CD4-positive, alpha-beta memory T cell (primary cell): ENCODE measurements at regions of chr15 and their contacts with region 1.

Region 1: DNA sequence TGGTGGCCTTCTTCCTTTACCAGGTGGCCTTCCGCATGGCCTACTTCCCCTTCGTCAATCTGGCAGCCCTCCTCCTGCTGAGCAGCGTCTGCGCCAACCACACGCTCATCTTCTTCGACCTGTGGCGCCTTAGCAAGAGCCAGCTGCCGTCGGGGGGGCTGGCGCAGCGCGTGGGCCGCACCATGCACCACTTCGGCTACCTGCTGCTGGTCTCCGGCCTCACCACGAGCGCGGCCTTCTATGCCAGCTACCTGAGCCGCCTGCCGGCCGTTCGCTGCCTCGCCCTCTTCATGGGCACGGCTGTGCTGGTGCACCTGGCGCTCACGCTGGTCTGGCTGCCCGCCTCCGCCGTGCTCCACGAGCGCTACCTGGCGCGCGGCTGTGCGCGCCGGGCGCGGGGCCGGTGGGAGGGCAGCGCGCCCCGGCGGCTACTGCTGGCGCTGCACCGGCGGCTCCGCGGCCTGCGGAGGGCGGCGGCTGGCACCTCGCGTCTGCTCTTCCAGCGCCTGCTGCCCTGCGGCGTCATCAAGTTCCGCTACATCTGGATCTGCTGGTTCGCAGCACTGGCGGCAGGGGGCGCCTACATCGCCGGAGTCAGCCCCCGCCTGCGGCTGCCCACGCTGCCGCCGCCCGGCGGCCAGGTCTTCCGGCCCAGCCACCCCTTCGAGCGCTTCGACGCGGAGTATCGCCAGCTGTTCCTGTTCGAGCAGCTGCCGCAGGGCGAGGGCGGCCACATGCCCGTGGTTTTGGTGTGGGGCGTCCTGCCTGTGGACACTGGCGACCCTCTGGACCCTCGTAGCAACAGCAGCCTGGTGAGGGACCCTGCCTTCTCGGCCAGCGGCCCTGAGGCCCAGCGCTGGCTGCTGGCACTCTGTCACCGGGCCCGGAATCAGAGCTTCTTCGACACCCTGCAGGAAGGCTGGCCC is 9.9 kb downstream of the DISP2 start:
- DNase-seq: peak; percentile 88 to 91 (median 89)
- H3K4me3 ChIP-seq: peak overlapping the region in 1 of 2 donors; percentile 45
- H3K4me3 Mint-ChIP-seq: peak overlapping the region; percentile 80 to 88 (median 85)
- H3K27ac ChIP-seq: peak overlapping the region; percentile 34
- H3K27ac Mint-ChIP-seq: peak overlapping the region; percentile 79 to 90 (median 86)
- H3K4me1 ChIP-seq: peaks cover 24% of the 10 kb centered on the region
- H3K4me1 Mint-ChIP-seq: peaks cover 11 to 27% (median 18%) of the 10 kb centered on the region in 4 donors
- H3K27me3 ChIP-seq: no peaks in the 10 kb centered on the region
- H3K27me3 Mint-ChIP-seq: no peaks in the 10 kb centered on the region

Region 2: GRCh38 chr15:39756806-39757522 is 611.0 kb before region 1 on chr15:
- CTCF ChIA-PET with region 1: no interaction called
- POLR2A ChIA-PET with region 1: no interaction called
- intact Hi-C with region 1: no loop called
- DNase-seq: peak in 4 of 5 donors; percentile 50 to 56 (median 54)
- H3K4me3 ChIP-seq: no peak overlapping the region
- H3K4me3 Mint-ChIP-seq: no peak overlapping the region
- H3K27ac ChIP-seq: no peak overlapping the region
- H3K27ac Mint-ChIP-seq: no peak overlapping the region
- H3K4me1 ChIP-seq: no peaks in the 10 kb centered on the region
- H3K4me1 Mint-ChIP-seq: no peaks in the 10 kb centered on the region
- H3K27me3 ChIP-seq: no peaks in the 10 kb centered on the region
- H3K27me3 Mint-ChIP-seq: peaks cover 0 to 3% of the 10 kb centered on the region in 2 donors

Region 3: DNA sequence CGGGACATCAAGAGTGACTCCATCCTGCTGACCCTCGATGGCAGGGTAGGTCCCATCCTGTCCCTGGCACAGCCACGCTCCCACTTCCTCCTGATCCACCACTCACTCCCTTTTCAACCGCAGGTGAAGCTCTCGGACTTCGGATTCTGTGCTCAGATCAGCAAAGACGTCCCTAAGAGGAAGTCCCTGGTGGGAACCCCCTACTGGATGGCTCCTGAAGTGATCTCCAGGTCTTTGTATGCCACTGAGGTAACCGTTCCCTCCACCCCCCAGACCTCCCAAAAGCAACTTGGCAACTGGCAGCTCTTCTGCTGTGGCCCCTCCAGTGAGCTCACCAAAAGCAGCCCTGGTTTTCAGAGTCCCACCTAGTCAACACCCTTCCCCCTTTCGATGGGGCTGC is 94.5 kb before region 1 on chr15:
- CTCF ChIA-PET with region 1: no interaction called
- POLR2A ChIA-PET with region 1: no interaction called
- intact Hi-C with region 1: no loop called
- DNase-seq: no peak
- H3K4me3 ChIP-seq: no peak overlapping the region
- H3K4me3 Mint-ChIP-seq: no peak overlapping the region
- H3K27ac ChIP-seq: no peak overlapping the region
- H3K27ac Mint-ChIP-seq: no peak overlapping the region
- H3K4me1 ChIP-seq: no peaks in the 10 kb centered on the region
- H3K4me1 Mint-ChIP-seq: peaks cover 0 to 11% (median under 1%) of the 10 kb centered on the region in 4 donors
- H3K27me3 ChIP-seq: no peaks in the 10 kb centered on the region
- H3K27me3 Mint-ChIP-seq: peaks cover 0 to 10% of the 10 kb centered on the region in 2 donors

Region 4: GRCh38 chr15:40323239-40323952 is 44.6 kb before region 1 on chr15 and contains the start of gene INAFM2:
- CTCF ChIA-PET with region 1: no interaction called
- POLR2A ChIA-PET with region 1: no interaction called
- intact Hi-C with region 1: no loop called
- DNase-seq: peak; percentile 88 to 90 (median 89)
- H3K4me3 ChIP-seq: peak within 1 kb of the TSS in 1 of 2 donors; percentile 56
- H3K4me3 Mint-ChIP-seq: peak within 1 kb of the TSS; percentile 79 to 89 (median 86)
- H3K27ac ChIP-seq: peak within 1 kb of the TSS; percentile 29
- H3K27ac Mint-ChIP-seq: peak within 1 kb of the TSS; percentile 36 to 93 (median 88)
- H3K4me1 ChIP-seq: peaks cover 22% of the 10 kb centered on the region
- H3K4me1 Mint-ChIP-seq: peaks cover 16 to 35% (median 25%) of the 10 kb centered on the region in 4 donors
- H3K27me3 ChIP-seq: no peaks in the 10 kb centered on the region
- H3K27me3 Mint-ChIP-seq: peaks cover 0 to 7% of the 10 kb centered on the region in 2 donors
- total RNA-seq, gene INAFM2: 7.2 to 7.5 TPM

Region 5: GRCh38 chr15:40338041-40338657 is 29.8 kb before region 1 on chr15:
- CTCF ChIA-PET with region 1: interaction called, 14 read pairs
- POLR2A ChIA-PET with region 1: no interaction called
- intact Hi-C with region 1: no loop called
- DNase-seq: peak; percentile 69 to 72 (median 71)
- H3K4me3 ChIP-seq: no peak overlapping the region
- H3K4me3 Mint-ChIP-seq: peak overlapping the region in 1 of 8 donors; percentile 46
- H3K27ac ChIP-seq: no peak overlapping the region
- H3K27ac Mint-ChIP-seq: no peak overlapping the region
- H3K4me1 ChIP-seq: peaks cover 15% of the 10 kb centered on the region
- H3K4me1 Mint-ChIP-seq: peaks cover 7 to 16% (median 9%) of the 10 kb centered on the region in 4 donors
- H3K27me3 ChIP-seq: no peaks in the 10 kb centered on the region
- H3K27me3 Mint-ChIP-seq: peaks cover 0 to 2% of the 10 kb centered on the region in 2 donors

Region 6: DNA sequence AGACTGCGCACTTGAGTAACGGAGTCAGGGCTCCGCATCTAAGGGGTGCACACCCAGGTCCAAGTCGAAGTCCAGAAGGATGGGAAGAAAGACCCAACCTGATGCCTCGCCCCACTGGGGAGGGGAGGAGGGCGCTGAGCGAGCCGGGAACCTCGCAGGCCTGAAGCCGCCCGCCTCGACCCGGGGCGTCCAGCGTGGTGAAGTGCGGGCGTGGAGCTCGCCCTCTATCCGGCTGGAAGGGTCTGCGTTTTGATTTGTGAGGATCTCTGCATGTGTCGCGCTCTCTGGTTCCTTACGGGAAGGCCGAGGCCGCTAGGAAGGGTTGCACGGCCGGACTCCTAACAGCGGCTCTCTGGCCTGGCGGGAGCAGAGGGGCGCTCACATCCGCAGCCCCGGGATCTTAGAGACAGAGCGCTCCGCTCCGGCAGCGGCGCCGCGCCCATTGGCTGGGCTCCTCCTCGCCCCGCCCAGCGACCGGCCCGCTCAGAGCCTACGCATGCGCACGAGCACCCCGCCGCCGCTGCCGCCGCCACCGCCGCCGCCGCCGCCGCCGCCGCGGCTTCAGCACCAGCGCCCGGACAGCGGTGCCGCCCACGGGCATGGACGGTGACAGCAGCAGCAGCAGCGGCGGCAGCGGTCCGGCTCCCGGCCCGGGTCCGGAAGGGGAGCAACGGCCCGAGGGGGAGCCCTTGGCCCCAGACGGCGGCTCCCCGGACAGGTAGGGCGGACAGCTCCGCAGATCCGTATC is 10.1 kb before region 1 on chr15 and contains the start of gene DISP2:
- CTCF ChIA-PET with region 1: interaction called, 16 read pairs
- POLR2A ChIA-PET with region 1: interaction called, 4 read pairs
- intact Hi-C with region 1: loop called (anchors 1 kb)
- DNase-seq: peak; percentile 85 to 96 (median 90)
- H3K4me3 ChIP-seq: peak within 1 kb of the TSS; percentile 29 to 58
- H3K4me3 Mint-ChIP-seq: peak within 1 kb of the TSS; percentile 80 to 87 (median 83)
- H3K27ac ChIP-seq: no peak within 1 kb of the TSS
- H3K27ac Mint-ChIP-seq: peak within 1 kb of the TSS in 2 of 7 donors; percentile 68 to 82
- H3K4me1 ChIP-seq: peaks cover 13% of the 10 kb centered on the region
- H3K4me1 Mint-ChIP-seq: peaks cover 5 to 21% (median 7%) of the 10 kb centered on the region in 4 donors
- H3K27me3 ChIP-seq: no peaks in the 10 kb centered on the region
- H3K27me3 Mint-ChIP-seq: peaks cover 0 to 4% of the 10 kb centered on the region in 2 donors
- total RNA-seq, gene DISP2: 0.03 to 0.23 TPM

Region 7: GRCh38 chr15:40398413-40398873 is 30.5 kb after region 1 on chr15:
- CTCF ChIA-PET with region 1: interaction called, 14 read pairs
- POLR2A ChIA-PET with region 1: interaction called, 6 read pairs
- intact Hi-C with region 1: no loop called
- DNase-seq: no peak
- H3K4me3 ChIP-seq: peak overlapping the region in 1 of 2 donors; percentile 5
- H3K4me3 Mint-ChIP-seq: peak overlapping the region; percentile 37 to 83 (median 66)
- H3K27ac ChIP-seq: no peak overlapping the region
- H3K27ac Mint-ChIP-seq: peak overlapping the region in 6 of 7 donors; percentile 5 to 88 (median 50)
- H3K4me1 ChIP-seq: peaks cover 14% of the 10 kb centered on the region
- H3K4me1 Mint-ChIP-seq: peaks cover 9 to 26% (median 14%) of the 10 kb centered on the region in 4 donors
- H3K27me3 ChIP-seq: no peaks in the 10 kb centered on the region
- H3K27me3 Mint-ChIP-seq: no peaks in the 10 kb centered on the region

Region 8: GRCh38 chr15:40421246-40422157 is 53.6 kb after region 1 on chr15:
- CTCF ChIA-PET with region 1: interaction called, 26 read pairs
- POLR2A ChIA-PET with region 1: interaction called, 4 read pairs
- intact Hi-C with region 1: loop called (anchors 1 kb)
- DNase-seq: peak; percentile 73 to 77 (median 74)
- H3K4me3 ChIP-seq: no peak overlapping the region
- H3K4me3 Mint-ChIP-seq: no peak overlapping the region
- H3K27ac ChIP-seq: no peak overlapping the region
- H3K27ac Mint-ChIP-seq: peak overlapping the region in 1 of 7 donors; percentile 40
- H3K4me1 ChIP-seq: peaks cover 8% of the 10 kb centered on the region
- H3K4me1 Mint-ChIP-seq: peaks cover 0 to 5% (median 0%) of the 10 kb centered on the region in 4 donors
- H3K27me3 ChIP-seq: no peaks in the 10 kb centered on the region
- H3K27me3 Mint-ChIP-seq: no peaks in the 10 kb centered on the region